PC-3 (cell line): ENCODE measurements at regions of chr3 and their contacts with region 1.

Region 1: GRCh38 chr3:4656059-4656458 is 162.9 kb downstream of the ITPR1 start:
- DNase-seq: peak; percentile 83
- ATAC-seq: peak; percentile 98
- H3K4me3 ChIP-seq: no peak overlapping the region
- H3K27ac ChIP-seq: no peak overlapping the region
- H3K4me1 ChIP-seq: peaks cover 4% of the 10 kb centered on the region
- H3K27me3 ChIP-seq: no peaks in the 10 kb centered on the region
- CTCF ChIP-seq: peak; percentile 98

Region 2: GRCh38 chr3:4712143-4712542 is 56.1 kb after region 1 on chr3:
- CTCF ChIA-PET with region 1: no interaction called
- POLR2A ChIA-PET with region 1: no interaction called
- intact Hi-C with region 1: loop called (anchors 1 kb)
- DNase-seq: peak; percentile 55
- ATAC-seq: no peak
- H3K4me3 ChIP-seq: no peak overlapping the region
- H3K27ac ChIP-seq: peak overlapping the region; percentile 18; the same call in 1 of the 2 replicates
- H3K4me1 ChIP-seq: peaks cover 28% of the 10 kb centered on the region
- H3K27me3 ChIP-seq: no peaks in the 10 kb centered on the region
- CTCF ChIP-seq: no peak

Region 3: GRCh38 chr3:5035692-5036391 is 379.8 kb after region 1 on chr3:
- CTCF ChIA-PET with region 1: interaction called, 10 read pairs
- POLR2A ChIA-PET with region 1: no interaction called
- intact Hi-C with region 1: no loop called
- DNase-seq: no peak
- ATAC-seq: no peak
- H3K4me3 ChIP-seq: no peak overlapping the region
- H3K27ac ChIP-seq: no peak overlapping the region
- H3K4me1 ChIP-seq: no peaks in the 10 kb centered on the region
- H3K27me3 ChIP-seq: no peaks in the 10 kb centered on the region
- CTCF ChIP-seq: no peak

Region 4: GRCh38 chr3:5057857-5058324 is 401.8 kb after region 1 on chr3:
- CTCF ChIA-PET with region 1: no interaction called
- POLR2A ChIA-PET with region 1: no interaction called
- intact Hi-C with region 1: loop called (anchors 1 kb)
- DNase-seq: peak; percentile 95
- ATAC-seq: peak; percentile 98
- H3K4me3 ChIP-seq: no peak overlapping the region
- H3K27ac ChIP-seq: peak overlapping the region; percentile 27
- H3K4me1 ChIP-seq: peaks cover 16% of the 10 kb centered on the region
- H3K27me3 ChIP-seq: no peaks in the 10 kb centered on the region
- CTCF ChIP-seq: peak; percentile 85

Region 5: DNA sequence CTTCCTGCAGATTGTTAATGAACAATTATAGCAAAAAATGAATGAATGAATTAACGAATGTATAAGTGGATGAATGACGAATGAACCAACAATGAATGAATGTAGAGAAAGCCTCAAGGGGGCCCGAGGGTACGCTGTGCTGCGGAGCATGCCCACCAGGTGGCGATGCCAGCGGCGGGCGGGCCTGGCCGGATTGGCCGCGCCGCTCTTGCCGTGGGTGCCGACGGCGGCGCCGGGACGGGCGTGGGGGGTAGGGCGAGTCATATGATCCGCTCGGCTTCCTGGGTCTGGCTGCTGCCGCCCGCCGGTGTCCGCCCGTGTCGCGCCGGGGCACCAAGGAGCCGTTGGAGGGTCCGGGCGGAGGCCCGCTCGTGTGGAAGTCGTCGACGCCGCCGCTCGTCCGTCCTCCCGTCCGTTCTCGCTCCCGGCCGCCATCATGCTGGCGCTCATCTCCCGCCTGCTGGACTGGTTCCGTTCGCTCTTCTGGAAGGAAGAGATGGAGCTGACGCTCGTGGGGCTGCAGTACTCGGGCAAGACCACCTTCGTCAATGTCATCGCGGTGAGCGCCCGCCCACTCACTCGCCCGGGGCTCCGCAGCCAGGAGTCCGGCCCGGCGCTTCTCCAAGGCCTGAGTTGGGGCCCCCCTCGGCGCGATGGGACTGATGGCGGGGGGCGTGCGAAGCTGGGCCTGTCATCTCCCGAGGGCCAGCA is 466.1 kb after region 1 on chr3 and contains the start of gene ARL8B:
- CTCF ChIA-PET with region 1: no interaction called
- POLR2A ChIA-PET with region 1: no interaction called
- intact Hi-C with region 1: loop called (anchors 5 kb)
- DNase-seq: peak; percentile 94
- ATAC-seq: peak; percentile 86
- H3K4me3 ChIP-seq: peak within 1 kb of the TSS; percentile 93
- H3K27ac ChIP-seq: peak within 1 kb of the TSS; percentile 78
- H3K4me1 ChIP-seq: peaks cover 31% of the 10 kb centered on the region
- H3K27me3 ChIP-seq: no peaks in the 10 kb centered on the region
- CTCF ChIP-seq: peak; percentile 98
- total RNA-seq, gene ARL8B: 43.8 and 45.3 TPM in 2 replicates